Activated CD4-positive, alpha-beta T cell treated with anti-CD3 and anti-CD28 coated beads for 36 hours (primary cell): ENCODE measurements at regions of chr18 and their contacts with region 1.

Region 1: DNA sequence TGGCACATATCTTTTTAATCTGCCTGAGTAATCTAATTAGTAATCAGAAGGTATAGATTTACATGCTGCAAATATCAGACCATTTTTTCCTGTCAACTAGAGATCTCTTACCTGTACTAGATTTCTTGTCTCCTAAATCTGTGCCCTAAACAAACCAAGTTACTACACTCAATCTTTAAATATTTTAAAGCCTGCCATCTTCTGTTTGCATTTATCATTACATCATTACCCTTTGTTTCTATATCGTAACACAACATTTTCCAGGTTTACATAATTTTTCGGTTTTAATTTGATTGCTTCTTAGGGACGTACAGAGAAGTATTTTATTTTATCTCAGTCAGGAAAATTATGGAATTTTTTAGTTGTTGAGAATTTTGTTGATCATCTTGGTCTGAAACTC is 25.7 kb downstream of the PSMA8 start:
- DNase-seq: no peak
- ATAC-seq: no peak
- H3K4me3 Mint-ChIP-seq: no peak overlapping the region
- H3K27ac Mint-ChIP-seq: no peak overlapping the region
- H3K4me1 Mint-ChIP-seq: no peaks in the 10 kb centered on the region
- H3K27me3 Mint-ChIP-seq: no peaks in the 10 kb centered on the region

Region 2: DNA sequence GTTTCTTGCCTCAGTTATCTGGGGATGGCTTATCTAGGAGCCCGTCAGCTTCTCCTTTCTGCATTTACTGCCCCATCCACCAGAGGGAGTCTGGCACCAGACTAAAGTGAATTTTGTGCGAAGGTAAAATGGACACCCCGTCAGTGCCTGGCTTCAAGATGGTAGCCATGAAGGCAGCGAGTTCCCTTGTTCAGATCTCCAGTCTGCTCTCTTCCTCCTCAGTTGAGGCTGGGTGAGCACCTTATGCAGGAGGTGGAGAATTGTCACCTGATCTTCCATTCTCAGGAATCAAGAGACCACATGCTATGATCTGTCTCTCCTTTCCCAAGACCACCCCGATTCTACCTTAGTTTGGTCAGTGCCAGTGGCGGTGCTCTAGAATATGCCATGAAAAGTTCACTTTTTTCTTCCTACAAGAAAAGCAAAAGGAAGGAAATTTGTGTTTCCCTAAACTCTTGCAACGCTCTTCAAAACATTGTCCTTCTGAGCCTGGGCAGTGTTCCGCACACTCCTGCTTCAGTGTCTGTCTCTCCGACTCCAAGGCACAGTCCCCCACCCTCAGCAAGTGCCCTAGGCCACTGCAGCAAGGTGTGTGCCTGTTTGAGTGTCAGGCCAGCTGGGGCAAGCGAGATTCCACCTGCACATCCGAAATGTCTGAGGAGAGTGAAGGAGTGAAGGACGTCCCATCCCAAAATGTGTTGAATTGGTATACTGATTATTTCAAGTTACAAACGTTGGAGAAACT is 237.5 kb before region 1 on chr18:
- CTCF ChIA-PET with region 1: interaction called, 3 read pairs
- POLR2A ChIA-PET with region 1: no interaction called
- intact Hi-C with region 1: loop called (anchors 1 to 5 kb)
- DNase-seq: peak; percentile 65
- ATAC-seq: peak; percentile 64
- H3K4me3 Mint-ChIP-seq: no peak overlapping the region
- H3K27ac Mint-ChIP-seq: no peak overlapping the region
- H3K4me1 Mint-ChIP-seq: no peaks in the 10 kb centered on the region
- H3K27me3 Mint-ChIP-seq: peaks cover 3% of the 10 kb centered on the region

Region 3: GRCh38 chr18:26103579-26103978 is 55.8 kb before region 1 on chr18:
- CTCF ChIA-PET with region 1: interaction called, 3 read pairs
- POLR2A ChIA-PET with region 1: no interaction called
- intact Hi-C with region 1: loop called in 1 of 2 experiments (anchors 5 kb)
- DNase-seq: peak; percentile 71
- ATAC-seq: peak; percentile 72
- H3K4me3 Mint-ChIP-seq: no peak overlapping the region
- H3K27ac Mint-ChIP-seq: no peak overlapping the region
- H3K4me1 Mint-ChIP-seq: no peaks in the 10 kb centered on the region
- H3K27me3 Mint-ChIP-seq: no peaks in the 10 kb centered on the region